Ovary (tissue), 10 donors: ENCODE measurements at regions of chr11 and their contacts with region 1.

Region 1: DNA sequence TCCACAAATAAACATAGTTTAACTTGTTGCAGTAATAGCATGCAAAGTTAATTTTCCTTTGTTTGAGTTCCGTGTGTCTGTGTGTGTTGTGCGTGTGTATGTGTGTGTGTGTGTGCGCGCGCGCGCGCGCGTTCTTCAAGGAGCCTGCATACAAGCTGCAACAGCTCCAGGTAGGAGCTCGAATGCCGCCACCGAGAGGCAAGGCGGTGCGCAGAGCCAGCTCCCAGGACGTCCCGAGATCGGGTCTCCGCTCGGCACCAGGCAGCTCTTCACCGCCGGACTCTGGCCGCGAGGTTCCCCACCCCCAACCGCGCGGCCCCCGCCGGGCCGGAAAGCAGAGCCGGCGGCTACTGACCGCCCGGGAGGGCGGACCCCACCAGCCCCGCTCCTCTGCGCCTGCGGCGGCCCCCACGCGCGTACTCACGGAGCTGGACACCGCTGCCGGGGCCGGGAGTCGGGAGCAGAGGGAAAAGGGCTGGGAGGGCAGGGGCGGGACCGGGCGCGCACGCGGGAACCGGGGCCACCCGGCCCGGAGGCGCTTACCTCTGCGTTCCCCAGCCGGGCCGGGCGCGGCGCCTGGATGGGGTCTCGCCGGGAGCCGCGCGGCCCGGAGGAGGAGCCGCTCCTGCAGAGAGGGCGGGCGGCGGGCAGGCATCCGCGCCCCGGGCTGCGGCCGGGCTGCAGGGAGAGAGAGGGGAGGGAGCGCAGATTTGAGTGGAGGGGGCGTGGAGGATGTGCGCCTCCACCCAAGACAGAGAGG is 40.4 kb upstream of the AKIP1 start:
- DNase-seq: peak; percentile 66 to 79 (median 70)
- H3K4me3 ChIP-seq: peak overlapping the region; percentile 91
- H3K27ac ChIP-seq: peak overlapping the region; percentile 84 to 92
- H3K4me1 ChIP-seq: peaks cover 8% of the 10 kb centered on the region
- H3K27me3 ChIP-seq: no peaks in the 10 kb centered on the region
- CTCF ChIP-seq: no peak
- EP300 ChIP-seq: no peak
- POLR2A ChIP-seq: no peak

Region 2: GRCh38 chr11:8426076-8426475 is 444.5 kb before region 1 on chr11:
- intact Hi-C with region 1: no loop called
- DNase-seq: no peak
- H3K4me3 ChIP-seq: no peak overlapping the region
- H3K27ac ChIP-seq: no peak overlapping the region
- H3K4me1 ChIP-seq: no peaks in the 10 kb centered on the region
- H3K27me3 ChIP-seq: no peaks in the 10 kb centered on the region
- CTCF ChIP-seq: no peak
- EP300 ChIP-seq: no peak
- POLR2A ChIP-seq: no peak

Region 3: GRCh38 chr11:8442301-8442700 is 428.3 kb before region 1 on chr11:
- intact Hi-C with region 1: no loop called
- DNase-seq: no peak
- H3K4me3 ChIP-seq: no peak overlapping the region
- H3K27ac ChIP-seq: no peak overlapping the region
- H3K4me1 ChIP-seq: no peaks in the 10 kb centered on the region
- H3K27me3 ChIP-seq: no peaks in the 10 kb centered on the region
- CTCF ChIP-seq: no peak
- EP300 ChIP-seq: no peak
- POLR2A ChIP-seq: no peak

Region 4: GRCh38 chr11:8826139-8826786 is 44.3 kb before region 1 on chr11:
- intact Hi-C with region 1: loop called in 1 of 4 experiments (anchors 5 kb)
- DNase-seq: peak in 1 of 5 donors; percentile 46
- H3K4me3 ChIP-seq: no peak overlapping the region
- H3K27ac ChIP-seq: peak overlapping the region in 1 of 2 donors; percentile 72
- H3K4me1 ChIP-seq: peaks cover 21% of the 10 kb centered on the region
- H3K27me3 ChIP-seq: no peaks in the 10 kb centered on the region
- CTCF ChIP-seq: no peak
- EP300 ChIP-seq: no peak
- POLR2A ChIP-seq: no peak

Region 5: DNA sequence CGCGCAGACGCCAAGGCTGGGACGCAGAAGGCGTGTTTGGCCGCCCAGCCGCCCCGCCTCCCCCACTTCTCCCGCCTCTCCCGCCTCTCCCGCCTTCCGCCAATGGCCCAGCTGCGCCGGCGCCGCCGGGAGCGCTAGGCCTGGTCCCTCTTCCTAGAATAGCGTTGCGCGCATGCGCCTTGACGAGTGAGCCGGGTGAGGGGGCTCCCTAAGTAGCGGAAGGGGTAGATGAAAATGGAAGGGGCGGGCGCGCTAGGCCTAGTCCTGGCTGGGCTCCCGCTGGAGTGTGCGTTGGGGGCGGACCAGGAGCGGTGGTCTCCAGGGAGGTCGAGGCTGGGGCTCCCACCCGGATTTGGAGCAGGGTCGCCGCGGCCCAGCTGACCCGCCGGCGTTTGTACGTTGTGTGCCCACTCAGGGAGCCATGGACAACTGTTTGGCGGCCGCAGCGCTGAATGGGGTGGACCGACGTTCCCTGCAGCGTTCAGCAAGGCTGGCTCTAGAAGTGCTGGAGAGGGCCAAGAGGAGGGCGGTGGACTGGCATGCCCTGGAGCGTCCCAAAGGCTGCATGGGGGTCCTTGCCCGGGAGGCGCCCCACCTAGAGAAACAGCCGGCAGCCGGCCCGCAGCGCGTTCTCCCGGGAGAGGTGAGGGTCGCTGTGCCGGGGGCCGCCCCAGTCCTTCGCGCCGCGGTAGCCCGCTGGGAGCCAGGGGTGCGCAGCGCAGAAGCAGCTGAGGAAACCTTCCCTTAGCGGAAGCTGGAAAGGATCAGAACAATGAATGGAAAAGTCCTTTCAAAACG is 40.6 kb after region 1 on chr11 and contains the start of gene AKIP1:
- intact Hi-C with region 1: loop called in 1 of 4 experiments (anchors 5 kb)
- DNase-seq: peak; percentile 97 to 98 (median 98)
- H3K4me3 ChIP-seq: peak within 1 kb of the TSS; percentile 83
- H3K27ac ChIP-seq: peak within 1 kb of the TSS; percentile 78 to 82
- H3K4me1 ChIP-seq: peaks cover 6% of the 10 kb centered on the region
- H3K27me3 ChIP-seq: no peaks in the 10 kb centered on the region
- CTCF ChIP-seq: no peak
- EP300 ChIP-seq: no peak
- POLR2A ChIP-seq: peak; percentile 57
- total RNA-seq, gene AKIP1: 12.4 to 26.2 (median 18.8) TPM

Region 6: DNA sequence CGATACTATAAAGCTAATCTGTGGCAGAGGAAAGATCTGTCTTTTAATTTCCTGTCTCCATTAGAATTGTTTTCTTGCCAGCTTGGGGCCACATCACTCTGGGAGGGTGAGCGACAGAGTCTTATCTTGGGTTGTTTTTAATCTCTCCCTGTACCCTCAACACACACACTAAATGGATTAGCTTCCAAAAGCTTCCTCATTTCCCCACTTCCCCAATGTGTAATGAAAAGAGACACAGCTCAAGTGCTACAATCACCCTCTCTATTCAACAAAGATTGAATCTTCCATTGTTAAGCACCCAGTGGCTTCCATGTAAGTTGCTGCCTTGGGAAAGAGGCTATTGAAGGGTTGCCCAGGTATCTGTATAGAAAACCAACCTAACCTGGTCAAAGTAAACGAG is 78.3 kb after region 1 on chr11:
- intact Hi-C with region 1: no loop called
- DNase-seq: no peak
- H3K4me3 ChIP-seq: no peak overlapping the region
- H3K27ac ChIP-seq: no peak overlapping the region
- H3K4me1 ChIP-seq: no peaks in the 10 kb centered on the region
- H3K27me3 ChIP-seq: no peaks in the 10 kb centered on the region
- CTCF ChIP-seq: no peak
- EP300 ChIP-seq: no peak
- POLR2A ChIP-seq: no peak